ENCODE measurements at regions of chr3 and their contacts with region 1.

Region 1: GRCh38 chr3:115760716-115761115 is 137.4 kb downstream of the GAP43 start:
- DNase-seq: no peak
- ATAC-seq: no peak
- H3K4me3 ChIP-seq: no peak overlapping the region
- H3K27ac ChIP-seq: no peak overlapping the region
- H3K4me1 ChIP-seq: peaks cover 0 to 6% (median 0%) of the 10 kb centered on the region in 12 donors
- H3K27me3 ChIP-seq: no peaks in the 10 kb centered on the region
- CTCF ChIP-seq: no peak
- POLR2A ChIP-seq: no peak

Region 2: DNA sequence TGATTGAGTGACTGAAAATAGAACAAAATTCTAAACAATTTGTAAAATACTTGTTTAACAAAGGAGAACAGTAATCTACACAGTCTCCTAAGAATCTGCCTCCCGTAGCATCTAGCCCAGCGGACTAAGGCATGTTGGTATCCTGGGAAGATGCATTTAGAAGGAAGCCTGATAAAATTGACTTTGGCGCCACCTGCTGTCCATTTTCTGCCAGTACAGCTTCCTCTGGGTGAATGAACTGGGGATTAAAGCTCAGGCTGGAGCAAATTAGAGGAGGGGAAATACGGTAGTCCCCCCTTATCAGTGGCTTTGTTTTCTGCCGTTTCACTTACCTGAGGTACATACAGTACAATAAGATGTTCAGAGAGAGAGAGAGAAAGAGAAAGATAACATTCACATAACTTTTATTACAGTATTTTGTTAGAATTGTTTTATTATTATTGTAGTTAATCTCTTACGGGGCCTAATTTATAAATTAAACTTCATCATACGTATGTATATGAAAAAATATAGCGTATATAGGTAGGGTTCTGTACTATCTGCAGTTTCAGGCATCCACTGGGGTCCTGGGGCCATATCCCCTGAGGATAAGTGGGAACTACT is 54.2 kb after region 1 on chr3:
- intact Hi-C with region 1: loop called in 1 of 10 experiments (anchors 2 kb)
- DNase-seq: peak; percentile 41 to 65 (median 51)
- ATAC-seq: peak; percentile 9 to 84 (median 68)
- H3K4me3 ChIP-seq: no peak overlapping the region
- H3K27ac ChIP-seq: no peak overlapping the region
- H3K4me1 ChIP-seq: no peaks in the 10 kb centered on the region
- H3K27me3 ChIP-seq: peaks cover 0 to 4% (median 0%) of the 10 kb centered on the region in 9 donors
- CTCF ChIP-seq: peak; percentile 82 to 96 (median 92)
- POLR2A ChIP-seq: no peak

Region 3: GRCh38 chr3:115947325-115947724 is 186.6 kb after region 1 on chr3:
- intact Hi-C with region 1: no loop called
- DNase-seq: no peak
- ATAC-seq: no peak
- H3K4me3 ChIP-seq: no peak overlapping the region
- H3K27ac ChIP-seq: no peak overlapping the region
- H3K4me1 ChIP-seq: no peaks in the 10 kb centered on the region
- H3K27me3 ChIP-seq: no peaks in the 10 kb centered on the region
- CTCF ChIP-seq: no peak
- POLR2A ChIP-seq: no peak